Activated CD8-positive, alpha-beta T cell treated with anti-CD3 and anti-CD28 coated beads, Interleukin-2, amount 10 ng/mL, durations not matched to agents 7 days and 5 days (primary cell): ENCODE measurements at regions of chr16 and their contacts with region 1.

Region 1: GRCh38 chr16:72832621-72833248 is 215.2 kb downstream of the ZFHX3 start:
- DNase-seq: peak; percentile 80
- ATAC-seq: peak; percentile 85
- H3K4me3 Mint-ChIP-seq: no peak overlapping the region
- H3K27ac Mint-ChIP-seq: no peak overlapping the region
- H3K4me1 Mint-ChIP-seq: peaks cover 32% of the 10 kb centered on the region
- H3K27me3 Mint-ChIP-seq: peaks cover 3% of the 10 kb centered on the region

Region 2: GRCh38 chr16:72501739-72502593 is 330.8 kb before region 1 on chr16:
- CTCF ChIA-PET with region 1: interaction called, 10 read pairs
- POLR2A ChIA-PET with region 1: no interaction called
- DNase-seq: peak; percentile 63
- ATAC-seq: peak; percentile 68
- H3K4me3 Mint-ChIP-seq: no peak overlapping the region
- H3K27ac Mint-ChIP-seq: no peak overlapping the region
- H3K4me1 Mint-ChIP-seq: no peaks in the 10 kb centered on the region
- H3K27me3 Mint-ChIP-seq: no peaks in the 10 kb centered on the region

Region 3: DNA sequence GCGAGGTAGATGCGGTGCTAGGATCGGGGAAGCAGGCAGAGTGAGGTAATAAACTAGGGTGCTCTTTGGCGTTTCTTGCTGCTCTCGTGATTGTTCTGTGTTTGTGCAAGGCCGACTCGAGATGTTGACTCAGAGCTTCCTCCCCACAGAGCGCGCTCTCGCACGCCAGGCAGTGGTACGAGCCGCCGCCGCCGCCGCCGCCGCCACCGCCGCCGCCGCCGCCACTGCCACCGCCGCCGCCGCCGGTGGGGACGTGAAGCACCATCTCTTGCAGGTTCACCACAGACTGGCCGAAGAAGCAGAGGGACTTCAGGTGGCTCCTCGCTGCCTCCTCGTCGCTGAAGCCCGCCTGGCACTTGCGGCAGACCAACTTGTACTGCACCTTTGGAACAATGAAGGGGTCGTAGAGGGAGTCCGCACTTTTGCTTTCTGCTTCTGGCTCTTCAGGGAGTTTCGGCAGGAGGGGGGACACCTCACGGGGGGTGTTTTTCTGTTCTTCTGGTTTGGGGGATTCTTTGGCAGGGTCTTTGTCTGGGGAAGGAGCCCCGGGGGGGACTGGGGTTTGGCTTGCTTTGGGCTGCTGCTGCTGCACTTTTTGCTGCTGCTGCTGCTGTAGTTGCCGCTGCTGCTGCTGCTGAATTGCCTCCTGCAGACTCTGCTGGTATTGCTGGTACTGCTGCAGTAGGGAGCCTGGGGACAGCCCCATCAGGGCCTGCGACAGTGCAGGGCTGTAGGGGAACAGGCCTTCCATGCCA is 45.0 kb before region 1 on chr16:
- CTCF ChIA-PET with region 1: interaction called, 14 read pairs
- POLR2A ChIA-PET with region 1: interaction called, 3 read pairs
- DNase-seq: peak; percentile 83
- ATAC-seq: peak; percentile 96
- H3K4me3 Mint-ChIP-seq: peak overlapping the region; percentile 76
- H3K27ac Mint-ChIP-seq: peak overlapping the region; percentile 88
- H3K4me1 Mint-ChIP-seq: peaks cover 37% of the 10 kb centered on the region
- H3K27me3 Mint-ChIP-seq: peaks cover 30% of the 10 kb centered on the region

Region 4: DNA sequence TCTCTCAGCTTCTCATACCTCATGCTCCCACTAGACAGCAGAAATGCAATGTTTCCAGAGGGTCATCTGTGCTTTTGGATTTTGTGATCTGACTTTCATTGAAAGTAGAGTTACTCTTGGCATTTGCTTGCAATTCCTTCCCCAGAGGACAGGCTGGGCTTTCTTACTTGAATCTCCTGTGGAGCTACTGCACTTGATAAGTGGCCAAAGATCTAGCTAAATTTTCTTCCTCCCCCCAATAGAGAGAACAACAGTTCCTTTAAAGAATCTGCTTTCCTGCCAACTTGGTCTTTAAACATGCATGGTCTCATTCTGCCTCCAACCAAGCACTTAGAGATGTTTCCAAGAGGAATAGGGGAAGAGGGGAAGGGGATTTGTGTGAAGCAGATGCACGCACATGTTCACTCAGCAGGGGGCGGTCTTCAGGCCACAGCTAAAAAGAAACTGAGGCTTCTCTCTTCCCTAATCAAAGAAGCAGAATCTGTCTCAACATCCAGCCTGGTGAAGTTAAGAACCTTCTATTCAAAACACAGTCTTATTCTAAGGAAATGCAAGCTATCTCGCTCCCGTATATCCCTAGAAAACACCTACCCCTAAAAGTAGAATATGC is 14.4 kb before region 1 on chr16:
- CTCF ChIA-PET with region 1: interaction called, 32 read pairs
- POLR2A ChIA-PET with region 1: no interaction called
- DNase-seq: no peak
- ATAC-seq: no peak
- H3K4me3 Mint-ChIP-seq: no peak overlapping the region
- H3K27ac Mint-ChIP-seq: no peak overlapping the region
- H3K4me1 Mint-ChIP-seq: peaks cover 5% of the 10 kb centered on the region
- H3K27me3 Mint-ChIP-seq: peaks cover 17% of the 10 kb centered on the region

Region 5: DNA sequence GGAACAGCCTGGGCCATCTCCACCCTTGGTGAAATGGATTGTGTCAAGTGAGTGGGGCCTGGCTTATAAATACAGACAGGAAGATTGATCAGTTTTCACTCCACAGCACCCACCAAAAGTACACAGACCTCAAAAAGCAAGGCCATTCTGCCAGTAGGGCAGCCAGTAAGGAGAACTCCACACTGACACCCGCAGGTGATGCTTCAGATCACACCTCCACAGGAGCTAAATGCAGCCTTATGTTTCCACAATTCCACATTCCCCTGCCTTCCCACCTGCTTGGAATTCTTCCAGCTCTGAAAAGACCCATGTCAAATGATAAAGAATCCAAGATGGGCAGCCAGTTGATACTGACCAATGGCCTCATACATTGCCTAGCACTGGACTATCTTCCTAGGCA is 24.1 kb after region 1 on chr16:
- CTCF ChIA-PET with region 1: interaction called, 50 read pairs
- POLR2A ChIA-PET with region 1: no interaction called
- DNase-seq: peak; percentile 60
- ATAC-seq: peak; percentile 78
- H3K4me3 Mint-ChIP-seq: no peak overlapping the region
- H3K27ac Mint-ChIP-seq: no peak overlapping the region
- H3K4me1 Mint-ChIP-seq: peaks cover 40% of the 10 kb centered on the region
- H3K27me3 Mint-ChIP-seq: peaks cover 12% of the 10 kb centered on the region

Region 6: GRCh38 chr16:73062743-73063733 is 230.3 kb after region 1 on chr16:
- CTCF ChIA-PET with region 1: interaction called, 11 read pairs
- POLR2A ChIA-PET with region 1: no interaction called
- DNase-seq: no peak
- ATAC-seq: no peak
- H3K4me3 Mint-ChIP-seq: no peak overlapping the region
- H3K27ac Mint-ChIP-seq: no peak overlapping the region
- H3K4me1 Mint-ChIP-seq: peaks cover 26% of the 10 kb centered on the region
- H3K27me3 Mint-ChIP-seq: peaks cover 73% of the 10 kb centered on the region

Region 7: GRCh38 chr16:73113336-73113735 is 280.6 kb after region 1 on chr16:
- CTCF ChIA-PET with region 1: no interaction called
- POLR2A ChIA-PET with region 1: no interaction called
- DNase-seq: no peak
- ATAC-seq: no peak
- H3K4me3 Mint-ChIP-seq: no peak overlapping the region
- H3K27ac Mint-ChIP-seq: no peak overlapping the region
- H3K4me1 Mint-ChIP-seq: no peaks in the 10 kb centered on the region
- H3K27me3 Mint-ChIP-seq: no peaks in the 10 kb centered on the region

Region 8: DNA sequence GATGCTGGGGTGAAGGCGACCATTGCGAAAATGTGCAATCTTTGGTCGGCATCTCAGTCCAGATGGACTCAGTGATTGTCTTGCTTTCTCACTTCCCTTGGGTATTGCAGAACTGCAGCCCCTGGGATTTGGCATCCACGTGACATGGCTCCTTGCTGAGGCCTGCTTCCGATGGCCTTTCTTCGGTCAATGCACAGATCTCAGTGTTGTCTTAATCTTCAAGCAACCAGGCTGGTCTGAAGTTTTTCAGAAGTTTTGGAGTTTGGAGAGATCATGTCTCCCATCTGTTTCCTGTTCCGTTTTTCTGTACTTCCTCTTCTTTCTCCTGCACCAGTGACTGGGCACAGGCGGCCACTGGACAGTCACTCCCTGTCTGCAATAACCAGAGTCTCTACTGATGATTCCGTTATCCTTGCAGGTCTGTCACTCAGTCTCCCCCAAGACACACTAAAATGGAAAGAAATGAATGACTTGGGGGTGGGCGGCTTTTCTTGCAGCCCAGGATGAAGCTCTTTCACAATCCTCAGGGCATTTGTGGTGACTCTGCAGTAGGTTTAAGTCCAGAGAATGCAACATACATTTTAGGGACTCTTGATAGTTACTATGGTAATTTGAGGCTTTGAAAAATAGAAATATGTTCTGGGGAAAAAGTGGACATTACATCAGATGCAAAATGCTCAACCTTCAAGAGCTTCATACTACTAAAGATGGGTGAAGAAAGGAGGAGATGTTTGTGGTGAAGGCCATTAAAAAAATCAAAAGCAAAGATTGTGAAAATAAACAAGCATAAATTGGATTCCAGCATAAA is 321.5 kb after region 1 on chr16:
- CTCF ChIA-PET with region 1: no interaction called
- POLR2A ChIA-PET with region 1: no interaction called
- DNase-seq: no peak
- ATAC-seq: no peak
- H3K4me3 Mint-ChIP-seq: no peak overlapping the region
- H3K27ac Mint-ChIP-seq: no peak overlapping the region
- H3K4me1 Mint-ChIP-seq: no peaks in the 10 kb centered on the region
- H3K27me3 Mint-ChIP-seq: peaks cover 11% of the 10 kb centered on the region